GM13977 (cell line): ENCODE measurements at regions of chr4 and their contacts with region 1.

Region 1: DNA sequence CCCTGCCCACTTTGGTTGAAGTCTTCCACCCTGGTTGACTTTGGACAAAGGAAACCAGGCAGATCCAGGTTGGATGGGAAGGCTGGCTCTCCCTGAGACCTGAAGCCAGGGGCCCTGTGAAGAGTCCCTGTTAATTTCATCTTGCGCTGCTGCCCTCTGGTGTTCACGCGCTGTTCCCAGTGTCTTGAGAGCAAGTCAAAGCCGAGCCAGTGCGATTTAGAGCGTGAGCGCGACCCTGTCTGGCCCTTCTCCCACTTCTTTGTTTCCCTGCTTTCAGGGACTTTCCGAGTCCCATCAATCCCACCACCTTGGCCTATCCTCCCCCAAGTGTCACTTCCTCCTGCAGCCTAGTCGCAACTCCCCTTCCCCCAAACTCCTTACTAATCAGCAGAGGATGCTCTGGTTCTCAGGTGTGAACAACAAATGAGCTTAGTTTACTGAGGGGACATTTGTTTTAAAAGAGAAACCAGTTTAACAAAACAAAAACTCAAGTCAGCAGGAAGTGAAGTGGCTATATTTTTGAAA is 25.8 kb upstream of the CHRNA9 start:
- DNase-seq: peak; percentile 41
- CTCF ChIP-seq: peak; percentile 93

Region 2: GRCh38 chr4:39458505-39459300 is 850.6 kb before region 1 on chr4 and contains the starts of genes LIAS and RPL9:
- in situ Hi-C with region 1: loop called (anchors 25 kb)
- DNase-seq: peak; percentile 94
- CTCF ChIP-seq: no peak

Region 3: DNA sequence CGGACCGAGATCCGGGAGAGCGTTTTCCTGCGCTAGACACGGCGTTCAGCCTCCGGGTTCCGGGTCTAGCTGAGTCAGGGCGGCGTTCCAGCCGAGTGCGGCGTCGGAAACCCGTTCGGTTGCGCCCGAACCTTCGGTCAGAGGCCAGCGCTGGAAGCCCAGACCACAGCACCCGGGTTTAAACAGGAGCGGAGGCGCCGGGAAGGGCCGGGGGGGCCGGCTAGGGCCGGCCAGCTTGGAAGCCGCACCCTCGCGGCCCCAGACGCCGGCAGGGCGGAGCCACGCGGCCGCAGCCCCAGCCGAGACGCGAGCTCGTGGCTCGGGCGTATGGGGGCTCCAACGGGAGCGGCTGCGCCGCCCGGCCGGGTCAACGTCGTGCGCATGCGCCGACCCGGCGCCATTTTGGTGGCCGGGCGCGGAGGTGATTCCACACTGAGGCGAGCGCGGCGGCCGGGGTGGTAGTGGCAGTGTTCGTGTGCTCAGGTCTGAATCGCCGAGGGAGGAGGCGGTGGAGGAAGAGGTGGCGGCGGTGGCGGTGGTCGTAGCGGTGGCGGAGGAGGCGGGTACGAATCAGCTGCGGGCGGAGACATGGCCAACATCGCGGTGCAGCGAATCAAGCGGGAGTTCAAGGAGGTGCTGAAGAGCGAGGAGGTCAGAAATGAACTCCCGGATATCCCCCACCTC is 611.4 kb before region 1 on chr4 and contains the start of gene UBE2K:
- in situ Hi-C with region 1: loop called (anchors 25 kb)
- DNase-seq: peak; percentile 95
- CTCF ChIP-seq: peak; percentile 6

Region 4: GRCh38 chr4:40199999-40200874 is 109.1 kb before region 1 on chr4:
- in situ Hi-C with region 1: loop called (anchors 25 kb)
- DNase-seq: peak; percentile 39
- CTCF ChIP-seq: no peak

Region 5: GRCh38 chr4:40536032-40536431 is 226.7 kb after region 1 on chr4:
- in situ Hi-C with region 1: no loop called
- DNase-seq: peak; percentile 56
- CTCF ChIP-seq: no peak

Region 6: DNA sequence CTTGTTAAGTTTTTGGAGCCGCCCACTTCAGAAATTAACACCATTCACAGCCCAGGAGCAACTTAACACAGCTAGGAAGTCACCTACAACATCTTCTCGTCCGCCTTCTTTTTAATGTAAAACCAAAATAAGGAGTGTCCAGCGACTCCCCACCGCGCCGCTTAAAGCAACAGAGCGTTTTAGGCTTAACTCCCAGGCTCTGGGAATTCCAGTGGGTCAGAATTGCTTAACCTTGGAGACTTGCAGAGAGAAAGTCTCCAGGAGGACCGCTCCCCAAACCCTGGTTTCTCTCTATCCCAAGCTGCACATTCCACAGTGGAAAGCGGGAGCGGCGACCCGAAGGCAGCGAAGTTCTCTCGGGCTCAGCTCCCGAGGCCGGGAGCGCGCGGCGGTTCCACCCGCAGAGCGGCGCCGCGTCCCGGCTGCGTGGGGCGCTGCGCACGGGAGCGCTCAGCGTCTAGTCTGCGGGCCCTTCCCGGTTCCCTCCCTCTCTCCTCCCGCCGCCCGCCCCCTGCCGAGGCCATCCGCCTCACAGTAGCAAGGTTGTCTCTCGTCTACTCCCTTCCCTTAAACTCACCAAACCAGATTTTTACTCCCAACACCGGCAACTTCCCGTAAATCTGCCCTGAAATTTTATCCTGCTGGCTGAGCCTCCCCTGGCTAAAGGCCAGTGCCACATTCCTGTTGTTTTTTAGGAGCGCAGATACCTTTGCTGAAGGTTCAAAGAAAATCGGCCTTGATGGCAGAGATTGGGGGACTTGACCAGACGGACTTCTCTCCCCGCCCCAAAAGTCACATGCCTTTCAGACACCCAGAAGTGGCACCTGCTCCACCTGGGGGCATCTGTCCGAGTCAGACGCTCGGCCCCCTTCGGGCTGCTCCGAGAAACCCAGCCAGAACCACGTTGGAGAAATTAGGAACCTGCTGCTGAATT is 320.4 kb after region 1 on chr4 and contains the start of gene RBM47:
- in situ Hi-C with region 1: no loop called
- DNase-seq: peak; percentile 59
- CTCF ChIP-seq: peak; percentile 32